ENCODE measurements at regions of chr4 and their contacts with region 1.

Region 1: GRCh38 chr4:174222266-174222872 is 61.1 kb downstream of the FBXO8 start:
- DNase-seq: peak in 1 of 2 experiments; percentile 49
- H3K4me3 ChIP-seq: no peak overlapping the region
- H3K4me3 Mint-ChIP-seq: no peak overlapping the region
- H3K27ac Mint-ChIP-seq: no peak overlapping the region
- H3K4me1 ChIP-seq: no peaks in the 10 kb centered on the region
- H3K4me1 Mint-ChIP-seq: no peaks in the 10 kb centered on the region
- H3K27me3 ChIP-seq: no peaks in the 10 kb centered on the region
- H3K27me3 Mint-ChIP-seq: no peaks in the 10 kb centered on the region
- CTCF ChIP-seq: peak; percentile 59 to 65

Region 2: GRCh38 chr4:174156239-174156826 is 66.0 kb before region 1 on chr4:
- CTCF ChIA-PET with region 1: no interaction called
- POLR2A ChIA-PET with region 1: no interaction called
- intact Hi-C with region 1: loop called (anchors 5 kb)
- DNase-seq: peak in 1 of 2 experiments; percentile 42
- H3K4me3 ChIP-seq: no peak overlapping the region
- H3K4me3 Mint-ChIP-seq: no peak overlapping the region
- H3K27ac Mint-ChIP-seq: no peak overlapping the region
- H3K4me1 ChIP-seq: no peaks in the 10 kb centered on the region
- H3K4me1 Mint-ChIP-seq: no peaks in the 10 kb centered on the region
- H3K27me3 ChIP-seq: peaks cover 1% of the 10 kb centered on the region; the same call in 1 of the 2 replicates
- H3K27me3 Mint-ChIP-seq: no peaks in the 10 kb centered on the region
- CTCF ChIP-seq: peak; percentile 53 to 58

Region 3: GRCh38 chr4:174193438-174194374 is 28.7 kb before region 1 on chr4:
- CTCF ChIA-PET with region 1: no interaction called
- POLR2A ChIA-PET with region 1: no interaction called
- intact Hi-C with region 1: loop called (anchors 1 kb)
- DNase-seq: peak; percentile 47 to 56
- H3K4me3 ChIP-seq: no peak overlapping the region
- H3K4me3 Mint-ChIP-seq: peak overlapping the region; percentile 12
- H3K27ac Mint-ChIP-seq: peak overlapping the region; percentile 59
- H3K4me1 ChIP-seq: peaks cover 43% of the 10 kb centered on the region
- H3K4me1 Mint-ChIP-seq: peaks cover 8% of the 10 kb centered on the region
- H3K27me3 ChIP-seq: no peaks in the 10 kb centered on the region
- H3K27me3 Mint-ChIP-seq: no peaks in the 10 kb centered on the region
- CTCF ChIP-seq: no peak

Region 4: GRCh38 chr4:174260099-174260498 is 37.7 kb after region 1 on chr4:
- CTCF ChIA-PET with region 1: no interaction called
- POLR2A ChIA-PET with region 1: no interaction called
- intact Hi-C with region 1: loop called (anchors 5 kb)
- DNase-seq: peak in 1 of 2 experiments; percentile 49
- H3K4me3 ChIP-seq: no peak overlapping the region
- H3K4me3 Mint-ChIP-seq: no peak overlapping the region
- H3K27ac Mint-ChIP-seq: no peak overlapping the region
- H3K4me1 ChIP-seq: peaks cover 10% of the 10 kb centered on the region; the same call in 1 of the 2 replicates
- H3K4me1 Mint-ChIP-seq: no peaks in the 10 kb centered on the region
- H3K27me3 ChIP-seq: no peaks in the 10 kb centered on the region
- H3K27me3 Mint-ChIP-seq: no peaks in the 10 kb centered on the region
- CTCF ChIP-seq: no peak

Region 5: DNA sequence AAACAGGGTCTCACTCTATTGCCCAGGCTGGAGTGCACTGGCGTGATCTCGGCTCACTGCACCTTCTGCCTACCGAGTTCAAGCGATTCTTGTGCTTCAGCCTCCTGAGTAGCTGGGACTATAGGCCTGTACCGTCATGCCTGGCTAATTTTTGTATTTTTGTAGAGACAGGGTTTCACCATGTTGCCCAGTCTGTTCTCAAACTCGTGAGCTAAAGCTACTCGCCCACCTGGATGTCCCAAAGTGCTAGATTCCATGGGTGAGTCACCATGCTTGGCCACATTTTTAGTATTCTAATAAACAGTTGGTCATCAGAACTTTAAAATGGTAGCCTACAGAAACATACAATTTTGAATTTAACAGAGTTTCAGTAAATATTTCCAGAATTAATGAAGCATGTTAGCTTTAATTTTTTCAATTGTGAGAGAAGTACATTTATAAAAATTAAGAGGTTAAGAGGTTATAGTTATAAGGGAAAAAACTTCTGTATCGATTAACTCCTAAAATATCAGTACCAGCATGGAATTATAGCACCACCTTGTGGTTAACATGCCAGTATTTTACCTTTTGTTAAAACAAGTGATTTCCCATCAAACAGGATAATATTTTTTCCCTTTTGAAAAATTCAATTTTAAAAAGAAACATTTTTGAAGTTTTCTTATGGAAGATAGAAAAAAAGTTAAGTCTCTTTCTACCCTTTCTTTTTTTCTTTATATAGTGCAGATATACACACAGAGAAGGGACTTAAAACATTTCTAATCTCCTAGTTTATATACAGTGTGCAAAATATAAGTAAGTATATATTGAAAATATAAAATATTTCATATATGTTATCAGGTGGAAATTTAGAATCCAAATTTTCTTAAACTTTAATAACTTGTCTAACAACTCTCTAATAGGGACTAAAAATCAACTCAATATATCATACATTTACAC is 96.7 kb after region 1 on chr4:
- CTCF ChIA-PET with region 1: no interaction called
- POLR2A ChIA-PET with region 1: no interaction called
- intact Hi-C with region 1: loop called (anchors 1 kb)
- DNase-seq: peak in 1 of 2 experiments; percentile 18
- H3K4me3 ChIP-seq: no peak overlapping the region
- H3K4me3 Mint-ChIP-seq: no peak overlapping the region
- H3K27ac Mint-ChIP-seq: no peak overlapping the region
- H3K4me1 ChIP-seq: no peaks in the 10 kb centered on the region
- H3K4me1 Mint-ChIP-seq: no peaks in the 10 kb centered on the region
- H3K27me3 ChIP-seq: no peaks in the 10 kb centered on the region
- H3K27me3 Mint-ChIP-seq: no peaks in the 10 kb centered on the region
- CTCF ChIP-seq: peak; percentile 42 to 45

Region 6: GRCh38 chr4:174631901-174632758 is 409.8 kb after region 1 on chr4:
- CTCF ChIA-PET with region 1: no interaction called
- POLR2A ChIA-PET with region 1: no interaction called
- intact Hi-C with region 1: loop called (anchors 1 kb)
- DNase-seq: peak in 1 of 2 experiments; percentile 44
- H3K4me3 ChIP-seq: no peak overlapping the region
- H3K4me3 Mint-ChIP-seq: no peak overlapping the region
- H3K27ac Mint-ChIP-seq: no peak overlapping the region
- H3K4me1 ChIP-seq: peaks cover 6% of the 10 kb centered on the region; the same call in 1 of the 2 replicates
- H3K4me1 Mint-ChIP-seq: peaks cover 6% of the 10 kb centered on the region
- H3K27me3 ChIP-seq: no peaks in the 10 kb centered on the region
- H3K27me3 Mint-ChIP-seq: no peaks in the 10 kb centered on the region
- CTCF ChIP-seq: peak; percentile 69 to 85

Region 7: GRCh38 chr4:174714393-174715211 is 492.2 kb after region 1 on chr4:
- CTCF ChIA-PET with region 1: no interaction called
- POLR2A ChIA-PET with region 1: no interaction called
- intact Hi-C with region 1: loop called (anchors 1 kb)
- DNase-seq: peak; percentile 50 to 65
- H3K4me3 ChIP-seq: no peak overlapping the region
- H3K4me3 Mint-ChIP-seq: no peak overlapping the region
- H3K27ac Mint-ChIP-seq: no peak overlapping the region
- H3K4me1 ChIP-seq: 0 out of 2 replicates have a peak, but pooled peaks cover 4% of the 10 kb centered on the region
- H3K4me1 Mint-ChIP-seq: peaks cover 8% of the 10 kb centered on the region
- H3K27me3 ChIP-seq: no peaks in the 10 kb centered on the region; the same call in 1 of the 2 replicates
- H3K27me3 Mint-ChIP-seq: peaks cover 5% of the 10 kb centered on the region
- CTCF ChIP-seq: peak; percentile 66 to 85

Measured in Caco-2 (cell line).